Activated T-helper 2 cell treated with anti-CD3 and anti-CD28 coated beads, Interferon-gamma antibody, Interleukin-2, Interleukin-4, amounts not matched to agents 10 μg/mL and 5 μg/mL and 100 μg/mL, durations not matched to agents 14 hours and 24 hours and 36 hours (primary cell): ENCODE measurements at regions of chr7 and their contacts with region 1.

Region 1: GRCh38 chr7:92833024-92833765 is 3.2 kb downstream of the CDK6 start:
- DNase-seq: peak; percentile 87
- H3K4me3 Mint-ChIP-seq: peak overlapping the region; percentile 94
- H3K27ac Mint-ChIP-seq: peak overlapping the region; percentile 98
- H3K4me1 Mint-ChIP-seq: peaks cover 40% of the 10 kb centered on the region
- H3K27me3 Mint-ChIP-seq: no peaks in the 10 kb centered on the region

Region 2: GRCh38 chr7:92245487-92246362 is 587.5 kb before region 1 on chr7 and contains the starts of genes ANKIB1 and KRIT1:
- intact Hi-C with region 1: loop called (anchors 5 kb)
- DNase-seq: peak; percentile 83
- H3K4me3 Mint-ChIP-seq: peak within 1 kb of the TSS; percentile 100
- H3K27ac Mint-ChIP-seq: peak within 1 kb of the TSS; percentile 100
- H3K4me1 Mint-ChIP-seq: peaks cover 30% of the 10 kb centered on the region
- H3K27me3 Mint-ChIP-seq: no peaks in the 10 kb centered on the region
- total RNA-seq, gene ANKIB1: 50.4 and 55.0 TPM in 2 replicates
- total RNA-seq, gene KRIT1: 37.4 and 43.0 TPM in 2 replicates

Region 3: GRCh38 chr7:92682903-92683539 is 150.2 kb before region 1 on chr7:
- intact Hi-C with region 1: loop called (anchors 1 kb)
- DNase-seq: no peak
- H3K4me3 Mint-ChIP-seq: peak overlapping the region; percentile 60
- H3K27ac Mint-ChIP-seq: peak overlapping the region; percentile 93
- H3K4me1 Mint-ChIP-seq: peaks cover 84% of the 10 kb centered on the region
- H3K27me3 Mint-ChIP-seq: no peaks in the 10 kb centered on the region

Region 4: DNA sequence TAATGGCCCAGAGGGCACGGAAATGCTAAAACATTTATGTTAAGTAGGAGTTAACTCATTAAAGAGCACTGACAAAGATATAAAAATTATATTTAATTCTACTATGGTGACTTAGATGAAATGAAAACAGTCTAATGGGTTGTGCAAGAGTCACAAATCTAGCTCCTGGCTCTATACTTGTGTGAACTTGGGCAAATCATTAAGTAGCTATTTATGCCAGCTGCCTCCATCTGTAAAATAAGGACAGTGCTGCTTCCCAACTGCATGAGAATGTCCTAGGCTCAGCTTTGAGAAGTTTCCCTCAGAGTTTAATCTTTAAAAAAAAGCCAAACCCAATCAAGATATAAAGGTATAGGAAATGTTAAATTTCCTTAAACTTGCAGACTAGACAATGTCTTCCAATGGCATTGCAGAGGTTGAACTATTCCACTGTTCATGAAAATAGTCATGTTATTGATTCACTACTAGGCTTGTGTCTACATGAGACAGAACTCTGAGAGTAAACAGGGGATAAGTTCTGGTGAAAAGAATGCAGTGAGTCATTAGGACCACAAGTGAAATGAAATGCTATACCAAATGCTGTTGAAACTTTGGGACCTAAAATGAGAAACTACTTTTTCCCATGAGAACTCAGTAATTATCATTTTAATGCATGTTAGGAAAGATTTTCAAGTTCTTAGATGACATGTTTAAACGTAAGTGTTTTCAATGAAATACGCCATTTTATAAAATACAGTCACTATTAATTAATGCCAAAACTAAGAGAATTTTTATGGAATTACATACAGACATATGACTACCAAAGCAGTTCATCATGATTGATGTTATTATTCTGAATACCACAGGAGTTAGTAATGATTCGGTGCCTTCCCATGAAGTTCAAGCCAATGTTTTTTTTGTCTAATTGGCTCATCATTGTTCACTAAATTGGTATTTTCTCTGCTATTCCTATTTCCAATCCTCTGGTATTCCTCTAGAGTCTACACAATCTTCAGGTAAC is 81.0 kb before region 1 on chr7:
- intact Hi-C with region 1: loop called (anchors 5 kb)
- DNase-seq: no peak
- H3K4me3 Mint-ChIP-seq: no peak overlapping the region
- H3K27ac Mint-ChIP-seq: peak overlapping the region; percentile 76
- H3K4me1 Mint-ChIP-seq: peaks cover 62% of the 10 kb centered on the region
- H3K27me3 Mint-ChIP-seq: no peaks in the 10 kb centered on the region

Region 5: DNA sequence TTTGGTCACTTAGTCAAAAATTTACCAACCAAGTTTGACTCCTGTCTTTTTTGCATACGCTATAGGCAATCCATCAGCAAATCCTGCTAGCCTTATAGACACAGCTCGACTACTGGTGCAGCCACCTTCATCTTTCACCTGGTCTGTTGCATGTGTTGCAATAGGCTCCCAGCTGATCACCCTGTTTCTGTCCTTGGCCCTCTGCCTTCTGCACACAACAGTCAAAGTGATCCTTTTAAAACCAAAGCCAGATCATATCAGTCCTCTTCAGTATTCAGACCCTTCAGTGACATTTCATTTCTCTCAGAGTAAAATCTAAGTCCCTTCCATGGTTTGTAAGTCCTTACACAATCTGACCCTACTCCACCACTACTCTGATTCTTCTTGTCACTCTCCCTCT is 14.1 kb after region 1 on chr7:
- intact Hi-C with region 1: loop called (anchors 1 kb)
- DNase-seq: no peak
- H3K4me3 Mint-ChIP-seq: no peak overlapping the region
- H3K27ac Mint-ChIP-seq: no peak overlapping the region
- H3K4me1 Mint-ChIP-seq: peaks cover 13% of the 10 kb centered on the region
- H3K27me3 Mint-ChIP-seq: no peaks in the 10 kb centered on the region

Region 6: DNA sequence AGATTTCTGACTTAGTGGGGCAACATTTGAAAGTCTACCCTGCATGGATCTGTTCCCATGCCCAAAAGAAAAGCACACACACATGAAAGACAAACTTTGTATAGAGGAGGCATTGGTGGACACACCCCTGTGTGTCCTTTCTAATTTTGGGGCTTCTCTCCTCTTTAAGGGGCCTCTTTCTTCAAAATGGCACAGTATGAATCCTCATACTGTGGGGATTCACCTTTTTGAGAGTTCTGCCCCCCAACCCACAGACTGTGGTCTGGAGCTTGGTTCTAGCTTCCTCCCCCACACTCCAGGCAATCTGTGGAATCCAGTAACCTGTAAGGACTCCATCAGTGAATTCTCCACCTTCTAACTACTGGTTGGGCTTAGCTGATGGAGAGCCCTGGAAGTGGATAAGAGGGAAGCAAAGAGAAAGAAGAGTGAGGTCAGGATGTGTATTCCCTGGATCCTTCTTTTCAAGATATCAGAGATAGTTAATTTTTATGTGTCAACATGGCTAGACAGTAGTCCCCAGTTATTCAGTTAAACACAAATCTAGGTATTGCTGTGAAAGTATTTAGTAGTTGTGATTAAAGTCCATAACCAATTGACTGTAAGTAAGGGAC is 35.6 kb after region 1 on chr7:
- intact Hi-C with region 1: no loop called
- DNase-seq: no peak
- H3K4me3 Mint-ChIP-seq: no peak overlapping the region
- H3K27ac Mint-ChIP-seq: no peak overlapping the region
- H3K4me1 Mint-ChIP-seq: peaks cover 15% of the 10 kb centered on the region
- H3K27me3 Mint-ChIP-seq: no peaks in the 10 kb centered on the region

Region 7: DNA sequence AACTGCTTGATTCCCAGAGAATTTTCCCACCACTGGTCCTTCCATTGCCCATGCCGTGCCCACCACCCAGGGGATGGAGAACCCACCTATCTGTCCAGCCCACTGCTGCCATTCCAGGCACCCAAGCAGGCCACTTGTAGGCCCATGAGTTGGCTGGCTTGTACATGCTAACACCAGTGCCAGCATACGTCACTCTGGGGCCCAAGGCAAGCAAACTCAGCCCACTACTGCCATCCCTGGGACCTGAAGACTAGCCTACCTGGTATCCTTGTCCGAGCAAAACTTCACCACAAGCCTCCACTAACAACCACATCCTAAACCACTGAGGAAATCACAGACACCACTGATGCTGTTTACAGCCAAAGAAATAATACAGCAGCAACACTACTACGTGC is 47.9 kb after region 1 on chr7:
- intact Hi-C with region 1: no loop called
- DNase-seq: no peak
- H3K4me3 Mint-ChIP-seq: no peak overlapping the region
- H3K27ac Mint-ChIP-seq: peak overlapping the region; percentile 14
- H3K4me1 Mint-ChIP-seq: peaks cover 32% of the 10 kb centered on the region
- H3K27me3 Mint-ChIP-seq: no peaks in the 10 kb centered on the region

Region 8: DNA sequence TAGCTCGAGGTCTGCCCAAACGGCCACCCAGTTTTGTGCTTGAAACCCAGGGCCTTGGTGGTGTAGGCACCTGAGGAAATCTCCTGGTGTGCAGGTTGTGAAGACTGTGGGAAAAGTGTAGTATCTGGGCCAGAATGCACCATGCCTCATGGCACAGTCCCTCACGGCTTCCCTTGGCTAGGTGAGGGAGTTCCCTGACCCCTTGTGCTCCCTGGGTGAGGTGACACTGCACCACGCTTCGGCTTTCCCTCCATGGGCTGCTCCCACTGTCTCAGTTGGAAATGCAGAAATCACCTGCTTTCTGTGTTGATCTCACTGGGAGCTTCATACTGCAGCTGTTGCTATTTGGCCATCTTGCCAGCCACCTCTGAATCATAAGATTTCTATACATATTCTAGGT is 65.6 kb after region 1 on chr7:
- intact Hi-C with region 1: no loop called
- DNase-seq: no peak
- H3K4me3 Mint-ChIP-seq: no peak overlapping the region
- H3K27ac Mint-ChIP-seq: no peak overlapping the region
- H3K4me1 Mint-ChIP-seq: peaks cover 9% of the 10 kb centered on the region
- H3K27me3 Mint-ChIP-seq: no peaks in the 10 kb centered on the region

Region 9: DNA sequence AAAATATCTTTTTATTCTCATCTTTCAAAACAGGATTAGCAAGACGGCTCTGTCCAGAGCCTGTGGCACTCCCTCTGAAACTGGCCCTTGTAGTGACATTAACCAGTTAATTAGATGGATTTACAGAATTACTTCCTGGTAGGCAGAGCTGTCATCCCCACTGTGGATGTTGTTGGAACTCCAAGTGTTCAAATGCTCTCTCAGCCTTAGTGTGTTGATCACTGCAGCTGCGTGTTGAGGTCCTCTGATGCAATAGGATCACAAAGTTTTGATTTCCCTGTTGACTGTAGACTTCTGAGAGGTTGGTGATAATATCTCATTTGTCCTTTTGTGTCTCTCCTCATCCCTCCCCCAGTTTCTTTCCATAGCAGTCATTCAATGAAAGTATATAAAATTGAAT is 120.5 kb after region 1 on chr7:
- intact Hi-C with region 1: loop called (anchors 1 kb)
- DNase-seq: no peak
- H3K4me3 Mint-ChIP-seq: no peak overlapping the region
- H3K27ac Mint-ChIP-seq: peak overlapping the region; percentile 83
- H3K4me1 Mint-ChIP-seq: peaks cover 35% of the 10 kb centered on the region
- H3K27me3 Mint-ChIP-seq: no peaks in the 10 kb centered on the region

Region 10: DNA sequence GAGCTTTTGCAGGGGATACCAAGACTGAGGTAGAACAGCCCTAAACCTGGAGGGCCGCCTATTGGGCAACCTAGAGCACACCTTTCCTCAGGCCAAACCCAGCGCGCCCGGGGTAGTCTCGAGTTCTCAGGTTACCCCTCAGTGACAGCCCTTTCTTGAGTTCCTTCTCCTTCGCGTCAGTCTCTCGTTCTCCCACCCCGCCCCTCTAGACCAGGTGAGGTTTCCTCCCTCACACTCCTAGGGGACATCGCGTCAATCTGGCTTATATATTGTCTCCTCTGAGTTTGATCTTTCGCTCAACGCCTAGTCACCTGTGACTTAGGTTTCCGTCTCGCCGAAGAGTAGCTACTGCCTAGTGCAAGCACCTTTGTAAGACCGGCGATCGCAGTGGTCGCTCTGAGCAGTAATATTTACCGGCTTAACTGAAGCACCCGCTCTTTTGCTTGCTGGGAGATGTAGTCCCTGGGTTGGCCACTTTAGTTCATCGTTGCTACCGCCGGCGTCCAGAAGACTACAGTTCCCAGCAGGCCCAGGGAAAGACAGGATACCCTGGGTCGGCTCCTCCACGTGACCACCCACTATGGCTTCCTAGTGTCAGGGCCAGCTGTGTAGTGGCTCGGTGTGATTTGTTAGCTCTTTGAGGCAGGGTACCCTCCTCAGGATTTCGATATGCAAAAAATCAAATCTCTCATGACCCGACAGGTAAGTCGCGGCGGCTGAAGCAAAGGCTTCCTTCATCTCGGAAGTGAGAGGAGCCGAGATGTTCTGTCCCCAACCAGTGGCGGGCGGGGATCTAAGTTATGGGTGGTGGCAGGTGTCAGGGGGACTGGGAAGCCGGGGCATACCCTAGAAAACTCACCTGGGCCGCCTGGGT is 398.8 kb after region 1 on chr7 and contains the start of gene VPS50:
- intact Hi-C with region 1: loop called (anchors 2 kb)
- DNase-seq: peak; percentile 89
- H3K4me3 Mint-ChIP-seq: peak within 1 kb of the TSS; percentile 96
- H3K27ac Mint-ChIP-seq: peak within 1 kb of the TSS; percentile 85
- H3K4me1 Mint-ChIP-seq: peaks cover 13% of the 10 kb centered on the region
- H3K27me3 Mint-ChIP-seq: peaks cover 4% of the 10 kb centered on the region
- total RNA-seq, gene VPS50: 14.8 and 15.6 TPM in 2 replicates